Natural killer cell (primary cell): ENCODE measurements at regions of chr14 and their contacts with region 1.

Region 1: GRCh38 chr14:22386924-22387775 is 201.9 kb downstream of the DAD1 start:
- DNase-seq: peak; percentile 58 to 64
- ATAC-seq: peak; percentile 59 to 69 (median 63)
- H3K4me3 ChIP-seq: no peak overlapping the region
- H3K4me3 Mint-ChIP-seq: no peak overlapping the region
- H3K27ac ChIP-seq: no peak overlapping the region
- H3K27ac Mint-ChIP-seq: peak overlapping the region; percentile 73 to 77
- H3K4me1 ChIP-seq: peaks cover 33% of the 10 kb centered on the region
- H3K4me1 Mint-ChIP-seq: peaks cover 36% of the 10 kb centered on the region in 2 donors
- H3K27me3 ChIP-seq: no peaks in the 10 kb centered on the region
- H3K27me3 Mint-ChIP-seq: no peaks in the 10 kb centered on the region
- CTCF ChIP-seq: peak; percentile 89

Region 2: DNA sequence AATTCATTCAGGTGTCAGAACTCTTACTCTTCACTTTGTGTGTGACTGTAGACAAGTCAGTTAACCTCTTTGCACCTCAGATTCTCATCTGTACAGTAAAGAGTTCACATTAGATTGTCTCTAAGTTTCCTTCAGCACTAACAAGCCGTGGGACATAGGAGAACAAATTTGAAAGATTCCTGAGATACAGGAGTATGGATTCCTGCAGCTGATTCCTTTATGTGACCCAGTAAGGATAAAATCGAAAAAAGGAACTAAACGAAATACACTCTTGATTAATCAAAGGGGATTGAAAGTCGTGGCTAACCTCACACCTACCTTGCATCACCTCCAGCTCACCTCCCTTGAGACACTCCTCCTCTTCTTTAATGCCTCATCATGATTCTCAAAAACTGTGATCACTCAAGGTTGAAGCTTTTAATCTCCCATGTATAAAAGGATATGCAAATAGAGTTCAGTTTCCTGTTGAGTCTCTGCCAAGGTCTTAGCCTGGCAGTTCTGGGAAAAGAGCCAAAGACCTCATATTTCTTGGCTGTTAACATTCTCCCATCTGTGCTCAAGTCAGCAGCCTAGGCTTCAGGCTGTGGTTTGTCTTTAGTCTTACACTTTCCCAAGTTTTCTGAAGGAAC is 45.3 kb after region 1 on chr14:
- intact Hi-C with region 1: loop called (anchors 5 kb)
- DNase-seq: no peak
- ATAC-seq: no peak
- H3K4me3 ChIP-seq: no peak overlapping the region
- H3K4me3 Mint-ChIP-seq: peak overlapping the region; percentile 62
- H3K27ac ChIP-seq: no peak overlapping the region
- H3K27ac Mint-ChIP-seq: peak overlapping the region; percentile 89 to 93
- H3K4me1 ChIP-seq: peaks cover 58% of the 10 kb centered on the region
- H3K4me1 Mint-ChIP-seq: peaks cover 69 to 79% of the 10 kb centered on the region in 2 donors
- H3K27me3 ChIP-seq: no peaks in the 10 kb centered on the region
- H3K27me3 Mint-ChIP-seq: no peaks in the 10 kb centered on the region
- CTCF ChIP-seq: no peak

Region 3: GRCh38 chr14:22653012-22653621 is 266.0 kb after region 1 on chr14:
- intact Hi-C with region 1: loop called (anchors 1 kb)
- DNase-seq: peak; percentile 20 to 75
- ATAC-seq: peak; percentile 60 to 77 (median 76)
- H3K4me3 ChIP-seq: no peak overlapping the region
- H3K4me3 Mint-ChIP-seq: no peak overlapping the region
- H3K27ac ChIP-seq: no peak overlapping the region
- H3K27ac Mint-ChIP-seq: no peak overlapping the region
- H3K4me1 ChIP-seq: no peaks in the 10 kb centered on the region
- H3K4me1 Mint-ChIP-seq: no peaks in the 10 kb centered on the region
- H3K27me3 ChIP-seq: no peaks in the 10 kb centered on the region
- H3K27me3 Mint-ChIP-seq: peaks cover 2 to 10% of the 10 kb centered on the region in 2 donors
- CTCF ChIP-seq: peak; percentile 63

Region 4: DNA sequence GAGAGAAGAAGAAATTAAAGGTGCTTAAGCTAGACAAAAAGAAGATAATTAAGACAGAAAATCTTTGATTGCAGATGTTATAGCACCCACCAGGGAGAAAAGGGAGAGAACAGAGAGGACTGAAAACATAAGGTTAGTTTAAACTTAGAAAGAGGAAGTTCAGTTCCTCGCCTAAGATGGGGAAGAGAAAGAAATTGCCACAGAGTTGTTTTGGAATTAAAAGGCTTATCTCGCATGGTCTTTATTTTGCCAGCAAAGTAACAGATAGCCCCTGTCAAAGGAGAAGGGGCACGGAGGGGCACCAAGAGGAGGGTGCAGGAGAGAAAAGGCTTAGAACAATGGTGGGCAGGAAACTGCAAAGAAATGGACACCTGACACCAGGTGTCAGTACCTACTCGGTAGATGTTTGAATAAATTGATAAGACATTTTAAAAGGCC is 361.5 kb after region 1 on chr14:
- intact Hi-C with region 1: no loop called
- DNase-seq: peak in 1 of 2 donors; percentile 17
- ATAC-seq: no peak
- H3K4me3 ChIP-seq: no peak overlapping the region
- H3K4me3 Mint-ChIP-seq: no peak overlapping the region
- H3K27ac ChIP-seq: no peak overlapping the region
- H3K27ac Mint-ChIP-seq: no peak overlapping the region
- H3K4me1 ChIP-seq: no peaks in the 10 kb centered on the region
- H3K4me1 Mint-ChIP-seq: peaks cover 0 to 6% of the 10 kb centered on the region in 2 donors
- H3K27me3 ChIP-seq: no peaks in the 10 kb centered on the region
- H3K27me3 Mint-ChIP-seq: peaks cover 20 to 22% of the 10 kb centered on the region in 2 donors
- CTCF ChIP-seq: no peak

Region 5: DNA sequence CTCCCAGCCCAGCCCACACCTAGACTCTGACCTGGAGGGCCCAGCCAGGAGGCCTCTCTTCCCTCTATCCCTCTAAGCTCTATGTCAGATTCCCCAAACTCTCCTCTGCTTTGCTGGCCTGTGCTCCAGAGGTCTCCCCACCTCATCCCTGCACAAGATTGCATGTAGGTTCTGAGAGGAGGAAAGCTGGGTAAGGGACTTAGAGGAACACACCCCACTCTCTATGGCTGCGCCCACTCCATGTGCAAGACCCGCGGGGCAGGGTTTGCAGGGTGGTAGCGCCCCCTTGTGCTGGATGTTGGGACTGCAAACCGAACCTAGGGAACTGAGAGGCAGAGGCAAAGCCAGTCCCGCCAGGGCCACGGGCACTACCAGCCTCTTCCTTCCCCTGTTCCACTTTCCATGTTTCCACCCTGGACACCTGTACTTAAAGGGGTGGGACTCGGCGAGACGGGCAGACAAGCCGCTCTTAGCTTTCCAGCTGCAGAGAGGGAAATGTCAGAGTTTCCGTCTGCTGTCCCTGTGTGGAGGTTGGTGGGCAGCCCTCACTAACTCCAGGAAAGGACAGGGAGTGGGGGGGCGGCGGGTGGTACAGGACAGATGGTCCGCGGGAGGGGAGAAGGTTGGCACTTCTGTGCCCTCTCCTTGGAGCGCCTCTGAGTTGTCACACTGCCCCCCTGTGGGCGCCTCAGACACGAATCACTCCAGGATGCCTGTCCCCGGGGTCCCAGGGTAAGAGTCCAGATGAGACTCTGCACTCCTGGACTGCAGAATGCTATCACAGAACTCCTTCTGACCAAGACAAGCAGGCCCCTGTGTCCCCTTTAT is 466.0 kb after region 1 on chr14:
- intact Hi-C with region 1: loop called (anchors 1 kb)
- DNase-seq: peak; percentile 89 to 90
- ATAC-seq: peak; percentile 93 to 95 (median 94)
- H3K4me3 ChIP-seq: peak overlapping the region; percentile 45
- H3K4me3 Mint-ChIP-seq: peak overlapping the region; percentile 75
- H3K27ac ChIP-seq: no peak overlapping the region
- H3K27ac Mint-ChIP-seq: peak overlapping the region in 1 of 2 donors; percentile 78
- H3K4me1 ChIP-seq: peaks cover 21% of the 10 kb centered on the region
- H3K4me1 Mint-ChIP-seq: peaks cover 4 to 9% of the 10 kb centered on the region in 2 donors
- H3K27me3 ChIP-seq: peaks cover 29% of the 10 kb centered on the region
- H3K27me3 Mint-ChIP-seq: peaks cover 24 to 29% of the 10 kb centered on the region in 2 donors
- CTCF ChIP-seq: peak; percentile 97

Region 6: GRCh38 chr14:22986508-22987054 is 599.4 kb after region 1 on chr14:
- intact Hi-C with region 1: loop called (anchors 2 kb)
- DNase-seq: peak; percentile 78 to 95
- ATAC-seq: peak; percentile 70 to 82 (median 70)
- H3K4me3 ChIP-seq: no peak overlapping the region
- H3K4me3 Mint-ChIP-seq: no peak overlapping the region
- H3K27ac ChIP-seq: no peak overlapping the region
- H3K27ac Mint-ChIP-seq: no peak overlapping the region
- H3K4me1 ChIP-seq: peaks cover 15% of the 10 kb centered on the region
- H3K4me1 Mint-ChIP-seq: no peaks in the 10 kb centered on the region
- H3K27me3 ChIP-seq: peaks cover 7% of the 10 kb centered on the region
- H3K27me3 Mint-ChIP-seq: no peaks in the 10 kb centered on the region
- CTCF ChIP-seq: peak; percentile 83

Region 7: GRCh38 chr14:23057757-23058653 is 670.9 kb after region 1 on chr14:
- intact Hi-C with region 1: loop called (anchors 10 kb)
- DNase-seq: peak; percentile 86 to 94
- ATAC-seq: peak; percentile 72 to 83 (median 73)
- H3K4me3 ChIP-seq: peak overlapping the region; percentile 58
- H3K4me3 Mint-ChIP-seq: peak overlapping the region; percentile 82
- H3K27ac ChIP-seq: no peak overlapping the region
- H3K27ac Mint-ChIP-seq: peak overlapping the region; percentile 60 to 74
- H3K4me1 ChIP-seq: peaks cover 18% of the 10 kb centered on the region
- H3K4me1 Mint-ChIP-seq: peaks cover 17 to 27% of the 10 kb centered on the region in 2 donors
- H3K27me3 ChIP-seq: no peaks in the 10 kb centered on the region
- H3K27me3 Mint-ChIP-seq: peaks cover 0 to 3% of the 10 kb centered on the region in 2 donors
- CTCF ChIP-seq: peak; percentile 98